ENCODE measurements at regions of chr3 and their contacts with region 1.

Region 1: GRCh38 chr3:126982471-126983175 is at the start of gene PLXNA1:
- DNase-seq: peak; percentile 81
- H3K4me3 ChIP-seq: peak within 1 kb of the TSS; percentile 34 to 51 (median 51)
- H3K27ac ChIP-seq: peak within 1 kb of the TSS; percentile 48
- H3K4me1 ChIP-seq: peaks cover 13% of the 10 kb centered on the region
- H3K27me3 ChIP-seq: peaks cover 3 to 29% of the 10 kb centered on the region in 2 experiments
- CTCF ChIP-seq: peak; percentile 95 to 96
- POLR2A ChIP-seq: no peak
- total RNA-seq, gene PLXNA1: 18.4 and 18.5 TPM in 2 replicates

Region 2: DNA sequence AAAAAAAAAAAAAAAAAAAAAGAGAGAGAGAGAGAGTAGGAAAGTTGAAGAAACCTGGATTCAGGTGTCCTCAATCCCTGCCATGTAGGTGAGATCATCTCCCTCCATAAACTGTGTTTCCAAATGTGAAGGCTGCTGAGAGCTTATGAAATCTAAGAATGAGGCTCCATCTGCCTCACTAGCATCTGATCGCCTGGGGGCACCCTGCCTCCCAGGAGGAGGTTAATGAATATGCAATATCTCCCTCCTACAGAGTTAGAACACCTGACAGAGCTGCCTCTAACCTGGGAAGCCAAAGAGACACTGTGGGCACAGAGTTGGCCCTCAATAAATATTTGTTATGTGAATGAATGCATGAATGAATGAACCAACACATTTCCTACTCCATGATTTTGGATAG is 1583.7 kb before region 1 on chr3:
- CTCF ChIA-PET with region 1: no interaction called
- POLR2A ChIA-PET with region 1: no interaction called
- dilution Hi-C with region 1: no loop called
- intact Hi-C with region 1: no loop called
- DNase-seq: no peak
- H3K4me3 ChIP-seq: no peak overlapping the region
- H3K27ac ChIP-seq: no peak overlapping the region
- H3K4me1 ChIP-seq: no peaks in the 10 kb centered on the region
- H3K27me3 ChIP-seq: peaks cover 13 to 25% of the 10 kb centered on the region in 2 experiments
- CTCF ChIP-seq: no peak
- POLR2A ChIP-seq: no peak

Region 3: GRCh38 chr3:126654571-126655383 is 327.8 kb before region 1 on chr3 and contains the start of gene TXNRD3:
- CTCF ChIA-PET with region 1: no interaction called
- POLR2A ChIA-PET with region 1: no interaction called
- dilution Hi-C with region 1: no loop called
- intact Hi-C with region 1: loop called (anchors 1 kb)
- DNase-seq: peak; percentile 64
- H3K4me3 ChIP-seq: peak within 1 kb of the TSS; percentile 41 to 84 (median 55)
- H3K27ac ChIP-seq: peak within 1 kb of the TSS; percentile 37
- H3K4me1 ChIP-seq: peaks cover 8% of the 10 kb centered on the region
- H3K27me3 ChIP-seq: peaks cover 0 to 6% of the 10 kb centered on the region in 2 experiments
- CTCF ChIP-seq: no peak
- POLR2A ChIP-seq: no peak
- total RNA-seq, gene TXNRD3: 5.0 and 7.1 TPM in 2 replicates

Region 4: GRCh38 chr3:126752303-126752842 is 230.2 kb before region 1 on chr3:
- CTCF ChIA-PET with region 1: interaction called, 16 read pairs
- POLR2A ChIA-PET with region 1: no interaction called
- dilution Hi-C with region 1: no loop called
- intact Hi-C with region 1: loop called (anchors 1 kb)
- DNase-seq: peak; percentile 73
- H3K4me3 ChIP-seq: no peak overlapping the region
- H3K27ac ChIP-seq: no peak overlapping the region
- H3K4me1 ChIP-seq: no peaks in the 10 kb centered on the region
- H3K27me3 ChIP-seq: no peaks in the 10 kb centered on the region
- CTCF ChIP-seq: peak; percentile 82 to 92
- POLR2A ChIP-seq: no peak

Region 5: DNA sequence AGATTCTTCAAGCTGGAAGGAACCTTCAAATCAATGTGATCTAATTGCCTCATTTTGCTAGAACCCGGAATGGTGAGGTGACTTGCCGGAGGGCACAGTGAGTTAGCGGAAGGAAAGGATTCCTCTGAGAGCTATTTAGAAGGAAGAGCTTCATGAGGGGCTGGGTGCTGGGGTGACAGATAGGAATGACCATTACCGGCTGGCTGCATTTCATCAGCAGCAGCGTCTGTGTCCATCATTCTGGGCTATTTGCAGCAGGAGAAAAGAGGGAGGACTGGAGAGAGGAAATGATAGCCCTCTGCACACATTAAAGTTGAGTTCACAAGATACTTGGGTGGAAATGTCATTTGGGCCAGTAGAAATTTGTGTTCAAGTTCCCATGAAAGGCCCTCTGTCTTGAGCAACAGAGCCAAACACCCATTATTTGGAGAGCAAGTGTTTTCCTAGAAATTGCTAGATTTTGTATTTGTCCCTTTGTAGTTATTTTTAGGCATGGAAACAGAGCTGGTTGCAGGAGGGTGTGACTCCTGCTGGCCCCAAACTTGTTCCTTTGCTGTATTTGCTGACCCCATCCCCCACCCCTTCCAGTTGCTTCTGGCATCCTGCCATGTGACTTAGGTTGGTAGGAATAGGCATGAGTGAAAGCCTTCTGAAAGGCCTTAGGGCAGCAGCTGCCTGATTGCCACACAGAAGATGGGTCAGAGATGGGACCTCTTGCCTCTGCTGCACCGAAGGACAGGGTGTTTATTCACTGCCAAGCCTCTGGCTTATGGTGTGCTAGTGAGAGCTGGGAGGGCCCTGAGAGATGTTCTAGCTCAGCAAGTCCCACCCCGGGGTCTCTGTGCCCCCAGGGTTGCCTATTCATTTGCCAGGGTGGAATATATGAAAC is 87.2 kb before region 1 on chr3:
- CTCF ChIA-PET with region 1: no interaction called
- POLR2A ChIA-PET with region 1: no interaction called
- dilution Hi-C with region 1: no loop called
- intact Hi-C with region 1: no loop called
- DNase-seq: no peak
- H3K4me3 ChIP-seq: no peak overlapping the region
- H3K27ac ChIP-seq: no peak overlapping the region
- H3K4me1 ChIP-seq: no peaks in the 10 kb centered on the region
- H3K27me3 ChIP-seq: peaks cover 6 to 10% of the 10 kb centered on the region in 2 experiments
- CTCF ChIP-seq: no peak
- POLR2A ChIP-seq: no peak

Region 6: GRCh38 chr3:126926684-126927400 is 55.8 kb before region 1 on chr3:
- CTCF ChIA-PET with region 1: interaction called, 4 read pairs
- POLR2A ChIA-PET with region 1: no interaction called
- dilution Hi-C with region 1: no loop called
- intact Hi-C with region 1: loop called (anchors 1 kb)
- DNase-seq: peak; percentile 88
- H3K4me3 ChIP-seq: no peak overlapping the region
- H3K27ac ChIP-seq: peak overlapping the region; percentile 40
- H3K4me1 ChIP-seq: peaks cover 44% of the 10 kb centered on the region
- H3K27me3 ChIP-seq: peaks cover 3 to 29% of the 10 kb centered on the region in 2 experiments
- CTCF ChIP-seq: peak; percentile 16 to 30
- POLR2A ChIP-seq: no peak

Region 7: GRCh38 chr3:127002195-127003174 is 19.9 kb after region 1 on chr3:
- CTCF ChIA-PET with region 1: interaction called, 12 read pairs
- POLR2A ChIA-PET with region 1: no interaction called
- dilution Hi-C with region 1: no loop called
- intact Hi-C with region 1: loop called (anchors 1 kb)
- DNase-seq: peak; percentile 83
- H3K4me3 ChIP-seq: no peak overlapping the region
- H3K27ac ChIP-seq: peak overlapping the region; percentile 50
- H3K4me1 ChIP-seq: peaks cover 11% of the 10 kb centered on the region
- H3K27me3 ChIP-seq: no peaks in the 10 kb centered on the region
- CTCF ChIP-seq: peak; percentile 74 to 82
- POLR2A ChIP-seq: peak; percentile 32

Region 8: GRCh38 chr3:127445581-127446343 is 463.1 kb after region 1 on chr3:
- CTCF ChIA-PET with region 1: no interaction called
- POLR2A ChIA-PET with region 1: no interaction called
- dilution Hi-C with region 1: no loop called
- intact Hi-C with region 1: no loop called
- DNase-seq: no peak
- H3K4me3 ChIP-seq: no peak overlapping the region
- H3K27ac ChIP-seq: no peak overlapping the region
- H3K4me1 ChIP-seq: no peaks in the 10 kb centered on the region
- H3K27me3 ChIP-seq: no peaks in the 10 kb centered on the region
- CTCF ChIP-seq: no peak
- POLR2A ChIP-seq: no peak

Measured in endothelial cell of umbilical vein (primary cell).